ENCODE measurements at regions of chr2 and their contacts with region 1.

Region 1: GRCh38 chr2:221573430-221574230 is 1.5 kb upstream of the EPHA4 start:
- DNase-seq: peak in 1 of 2 donors; percentile 92
- H3K4me3 ChIP-seq: peak overlapping the region; percentile 58 to 88
- H3K27ac ChIP-seq: peak overlapping the region; percentile 81
- H3K4me1 ChIP-seq: peaks cover 29% of the 10 kb centered on the region
- H3K27me3 ChIP-seq: no peaks in the 10 kb centered on the region
- CTCF ChIP-seq: peak; percentile 91 to 98 (median 97)
- POLR2A ChIP-seq: no peak

Region 2: DNA sequence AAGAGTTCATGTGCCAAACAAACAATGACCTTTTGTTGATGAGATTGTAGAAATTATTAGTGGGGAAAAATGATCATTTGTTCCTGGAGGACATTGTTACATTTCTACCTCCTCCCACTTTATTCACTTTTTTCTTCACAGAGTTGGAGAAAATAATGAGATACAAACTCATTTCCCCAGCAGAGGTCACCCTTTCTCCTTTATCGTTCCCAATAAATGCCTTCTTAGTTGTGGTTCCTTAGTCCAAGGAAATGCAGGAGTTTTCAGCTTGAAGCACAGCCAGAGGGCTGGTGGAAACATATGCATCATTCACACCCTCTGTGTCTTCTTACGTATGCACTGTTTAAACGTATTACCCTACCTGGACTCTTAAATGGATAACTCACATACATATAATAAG is 1837.4 kb before region 1 on chr2:
- intact Hi-C with region 1: loop called (anchors 10 kb)
- DNase-seq: no peak
- H3K4me3 ChIP-seq: no peak overlapping the region
- H3K27ac ChIP-seq: no peak overlapping the region
- H3K4me1 ChIP-seq: no peaks in the 10 kb centered on the region
- H3K27me3 ChIP-seq: no peaks in the 10 kb centered on the region
- CTCF ChIP-seq: peak in 1 of 3 experiments; percentile 51
- POLR2A ChIP-seq: no peak

Region 3: GRCh38 chr2:220687231-220687843 is 886.3 kb before region 1 on chr2:
- intact Hi-C with region 1: loop called (anchors 2 kb)
- DNase-seq: no peak
- H3K4me3 ChIP-seq: no peak overlapping the region
- H3K27ac ChIP-seq: no peak overlapping the region
- H3K4me1 ChIP-seq: no peaks in the 10 kb centered on the region
- H3K27me3 ChIP-seq: no peaks in the 10 kb centered on the region
- CTCF ChIP-seq: peak; percentile 63 to 79 (median 71)
- POLR2A ChIP-seq: no peak